IMR-90 (cell line): ENCODE measurements at regions of chr19 and their contacts with region 1.

Region 1: GRCh38 chr19:52189735-52190486 is at the start of gene PPP2R1A:
- DNase-seq: peak; percentile 100
- ATAC-seq: peak; percentile 89
- H3K4me3 ChIP-seq: peak within 1 kb of the TSS; percentile 80
- H3K27ac ChIP-seq: peak within 1 kb of the TSS; percentile 98
- H3K4me1 ChIP-seq: peaks cover 7% of the 10 kb centered on the region; the same call in 1 of the 2 replicates
- H3K27me3 ChIP-seq: no peaks in the 10 kb centered on the region
- CTCF ChIP-seq: no peak
- POLR2A ChIP-seq: peak; percentile 90
- RAD21 ChIP-seq: no peak
- total RNA-seq, gene PPP2R1A: 137 and 173 TPM in 2 replicates

Region 2: DNA sequence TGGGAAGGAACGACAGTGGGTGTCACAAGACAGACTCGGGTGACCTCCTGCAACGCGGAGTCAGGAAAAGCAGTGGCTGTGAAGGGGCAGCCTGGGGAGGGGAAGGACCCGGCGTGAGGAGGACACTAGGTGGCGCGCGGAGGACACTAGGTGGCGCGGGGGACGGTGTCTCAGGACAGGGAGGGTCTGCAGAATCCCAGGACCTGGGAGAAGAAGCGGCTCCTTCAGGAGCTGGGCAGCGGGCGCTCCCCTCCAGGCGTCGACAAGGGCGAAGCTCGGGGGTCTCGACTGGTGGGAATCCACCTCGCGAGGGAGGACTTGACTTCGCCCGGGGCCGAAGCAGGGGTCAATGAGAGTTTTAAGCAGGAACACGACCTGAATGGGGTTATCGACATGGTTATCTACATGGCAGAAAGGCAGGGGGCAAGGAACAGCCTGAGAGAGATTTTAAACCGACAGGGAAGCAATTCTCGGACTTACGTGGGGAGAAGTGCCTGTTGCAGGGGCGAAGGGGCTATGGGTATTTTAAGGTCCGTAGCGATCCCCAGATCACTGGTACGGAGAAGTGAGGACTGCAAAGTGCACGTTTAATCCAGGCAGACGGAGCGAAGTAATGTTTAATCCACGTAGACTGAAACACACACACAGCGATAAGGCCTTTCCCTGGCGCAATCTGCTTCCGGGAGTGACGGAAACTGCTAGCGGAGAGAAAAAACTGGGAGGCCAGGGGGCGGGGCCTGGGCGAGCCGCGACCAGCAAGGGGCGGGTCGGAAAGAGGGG is 50.5 kb before region 1 on chr19 and contains the start of gene ZNF616:
- CTCF ChIA-PET with region 1: no interaction called
- POLR2A ChIA-PET with region 1: no interaction called
- dilution Hi-C with region 1: no loop called
- in situ Hi-C with region 1: no loop called
- intact Hi-C with region 1: loop called (anchors 1 kb)
- DNase-seq: peak; percentile 91
- ATAC-seq: peak; percentile 82
- H3K4me3 ChIP-seq: peak within 1 kb of the TSS; percentile 53
- H3K27ac ChIP-seq: peak within 1 kb of the TSS; percentile 91
- H3K4me1 ChIP-seq: peaks cover 2% of the 10 kb centered on the region
- H3K27me3 ChIP-seq: no peaks in the 10 kb centered on the region
- CTCF ChIP-seq: peak; percentile 76
- POLR2A ChIP-seq: peak; percentile 83
- RAD21 ChIP-seq: peak; percentile 61
- total RNA-seq, gene ZNF616: 13.3 and 13.6 TPM in 2 replicates

Region 3: DNA sequence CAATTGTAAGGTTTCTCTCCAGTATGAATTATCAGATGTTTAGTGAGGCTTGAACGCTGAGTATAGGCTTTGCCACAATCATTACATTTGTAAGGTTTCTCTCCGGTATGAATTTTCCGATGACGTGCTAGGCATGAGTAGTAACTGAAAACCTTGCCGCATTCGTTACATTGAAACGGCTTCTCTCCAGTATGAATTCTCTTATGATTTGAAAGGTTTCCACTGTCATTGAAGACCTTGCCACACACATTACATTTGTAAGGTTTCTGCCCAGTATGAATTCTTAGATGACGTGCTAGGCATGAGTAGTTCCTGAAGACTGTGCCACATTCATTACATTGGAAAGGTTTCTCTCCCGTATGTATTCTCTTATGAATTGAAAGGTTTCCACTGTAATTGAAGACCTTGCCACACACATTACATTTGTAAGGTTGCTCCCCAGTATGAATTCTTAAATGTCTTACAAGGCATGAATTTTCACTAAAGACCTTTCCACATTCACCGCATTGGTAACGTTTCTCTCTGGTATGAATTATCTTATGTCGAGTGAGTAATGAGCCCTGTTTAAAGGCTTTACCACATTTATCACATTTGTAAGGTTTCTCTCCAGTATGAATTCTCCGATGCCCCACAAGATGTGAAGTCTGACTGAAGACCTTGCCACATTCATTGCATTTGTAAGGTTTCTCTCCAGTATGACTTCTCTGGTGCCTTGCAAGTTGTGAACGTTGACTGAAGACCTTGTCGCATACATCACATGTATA is 34.1 kb before region 1 on chr19:
- CTCF ChIA-PET with region 1: no interaction called
- POLR2A ChIA-PET with region 1: no interaction called
- dilution Hi-C with region 1: no loop called
- in situ Hi-C with region 1: no loop called
- intact Hi-C with region 1: loop called (anchors 1 kb)
- DNase-seq: no peak
- ATAC-seq: no peak
- H3K4me3 ChIP-seq: no peak overlapping the region
- H3K27ac ChIP-seq: no peak overlapping the region
- H3K4me1 ChIP-seq: no peaks in the 10 kb centered on the region
- H3K27me3 ChIP-seq: no peaks in the 10 kb centered on the region
- CTCF ChIP-seq: no peak
- POLR2A ChIP-seq: no peak
- RAD21 ChIP-seq: no peak

Region 4: DNA sequence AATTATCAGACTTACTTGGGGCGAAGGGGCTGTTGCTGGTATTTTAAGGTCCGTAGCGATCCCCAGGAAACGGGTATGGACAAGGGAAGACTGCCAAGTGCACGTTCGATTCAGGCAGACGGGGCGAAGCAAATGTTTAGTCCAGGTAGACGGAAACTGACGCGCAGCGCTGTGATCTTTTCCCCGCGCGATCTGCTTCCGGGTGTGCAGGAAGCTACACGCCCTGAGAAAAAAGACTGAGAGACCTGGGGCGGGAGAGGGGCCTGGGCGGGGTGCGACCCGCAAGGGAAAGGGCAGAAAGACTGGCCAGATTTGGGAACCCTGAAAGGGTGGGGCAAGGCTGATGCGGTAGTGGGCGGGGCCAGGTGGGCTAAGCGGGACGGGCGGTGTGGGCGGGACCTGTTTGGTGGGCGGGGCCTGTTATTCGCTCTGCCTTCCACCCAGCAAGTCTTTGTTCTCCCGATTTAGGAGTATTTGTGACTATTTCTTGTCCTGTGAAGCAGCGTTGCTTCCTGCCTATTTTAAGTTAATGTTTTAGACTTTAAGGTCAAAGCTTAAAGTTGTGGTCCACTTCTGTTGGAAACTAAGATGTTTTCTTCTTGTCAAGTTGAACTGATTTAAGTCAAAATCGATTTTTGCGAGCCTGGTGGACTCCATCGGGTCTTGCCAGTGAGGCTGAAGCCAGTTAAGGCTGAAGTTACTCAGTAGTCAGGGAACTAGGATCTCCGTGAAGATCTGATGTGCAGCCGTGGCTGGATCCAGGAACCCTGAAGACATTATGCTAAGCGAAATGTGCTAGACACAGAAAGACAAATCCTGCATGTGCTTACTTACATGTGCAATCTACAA is 18.4 kb before region 1 on chr19 and contains the start of gene ZNF836:
- CTCF ChIA-PET with region 1: no interaction called
- POLR2A ChIA-PET with region 1: interaction called, 4 read pairs
- dilution Hi-C with region 1: no loop called
- in situ Hi-C with region 1: no loop called
- intact Hi-C with region 1: loop called (anchors 2 kb)
- DNase-seq: peak; percentile 59
- ATAC-seq: peak; percentile 96
- H3K4me3 ChIP-seq: peak within 1 kb of the TSS; percentile 90
- H3K27ac ChIP-seq: peak within 1 kb of the TSS; percentile 68
- H3K4me1 ChIP-seq: no peaks in the 10 kb centered on the region
- H3K27me3 ChIP-seq: no peaks in the 10 kb centered on the region
- CTCF ChIP-seq: no peak
- POLR2A ChIP-seq: no peak
- RAD21 ChIP-seq: no peak
- total RNA-seq, gene ZNF836: 4.1 and 5.0 TPM in 2 replicates

Region 5: DNA sequence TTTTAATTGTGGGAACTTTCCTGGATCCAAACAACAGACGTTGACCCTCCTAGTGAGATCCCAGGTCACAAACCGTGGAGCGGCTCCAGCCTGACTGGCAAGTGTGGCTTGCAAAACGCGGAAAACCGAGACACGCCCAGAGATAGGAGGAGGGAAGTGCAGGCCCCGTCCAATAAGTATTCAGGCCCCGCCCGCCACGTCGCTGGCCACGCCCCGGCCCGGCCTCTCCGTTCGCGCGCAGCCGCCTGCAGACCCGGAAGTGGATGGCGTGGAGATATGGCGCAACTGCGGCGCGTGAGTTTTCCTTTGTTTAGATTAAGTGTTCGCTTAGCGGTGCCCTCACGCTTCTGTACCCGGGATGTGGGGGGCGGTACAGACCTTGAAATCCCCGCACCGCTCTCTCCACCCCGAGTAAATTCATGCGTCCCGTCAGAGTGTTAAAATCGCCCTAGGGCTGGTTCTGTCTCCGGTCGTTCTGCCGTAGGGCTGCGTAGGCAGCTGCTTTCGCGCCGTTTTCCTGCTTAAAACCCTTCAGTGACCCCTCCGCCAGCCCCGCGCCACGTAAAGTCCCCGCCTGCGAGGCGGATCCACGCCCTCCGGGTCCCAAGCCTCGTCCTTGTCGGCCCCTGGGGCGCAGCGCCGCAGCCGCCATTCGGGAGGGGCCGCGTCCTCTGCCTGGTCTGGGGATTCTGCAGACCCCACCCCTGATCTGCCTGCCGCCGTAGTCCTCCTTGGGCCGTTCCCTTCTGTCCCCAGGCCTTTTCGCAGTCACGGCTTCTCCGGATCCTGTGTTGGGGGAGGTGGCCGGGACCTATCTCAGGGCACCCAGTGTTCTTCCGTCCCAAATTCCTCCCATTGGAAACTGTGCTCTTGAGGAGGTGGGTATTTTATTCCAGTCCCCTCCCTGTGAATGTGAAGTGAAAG is 79.7 kb after region 1 on chr19 and contains the start of gene ZNF766:
- CTCF ChIA-PET with region 1: no interaction called
- POLR2A ChIA-PET with region 1: no interaction called
- dilution Hi-C with region 1: no loop called
- in situ Hi-C with region 1: no loop called
- intact Hi-C with region 1: no loop called
- DNase-seq: peak; percentile 94
- ATAC-seq: peak; percentile 98
- H3K4me3 ChIP-seq: peak within 1 kb of the TSS; percentile 90
- H3K27ac ChIP-seq: peak within 1 kb of the TSS; percentile 97
- H3K4me1 ChIP-seq: peaks cover 2% of the 10 kb centered on the region
- H3K27me3 ChIP-seq: no peaks in the 10 kb centered on the region
- CTCF ChIP-seq: no peak
- POLR2A ChIP-seq: peak; percentile 85
- RAD21 ChIP-seq: 0 out of 2 replicates have a peak, but pooled peaks have one; percentile 1
- total RNA-seq, gene ZNF766: 18.9 and 20.4 TPM in 2 replicates